Aorta (tissue), 5 donors: ENCODE measurements at regions of chr5 and their contacts with region 1.

Region 1: DNA sequence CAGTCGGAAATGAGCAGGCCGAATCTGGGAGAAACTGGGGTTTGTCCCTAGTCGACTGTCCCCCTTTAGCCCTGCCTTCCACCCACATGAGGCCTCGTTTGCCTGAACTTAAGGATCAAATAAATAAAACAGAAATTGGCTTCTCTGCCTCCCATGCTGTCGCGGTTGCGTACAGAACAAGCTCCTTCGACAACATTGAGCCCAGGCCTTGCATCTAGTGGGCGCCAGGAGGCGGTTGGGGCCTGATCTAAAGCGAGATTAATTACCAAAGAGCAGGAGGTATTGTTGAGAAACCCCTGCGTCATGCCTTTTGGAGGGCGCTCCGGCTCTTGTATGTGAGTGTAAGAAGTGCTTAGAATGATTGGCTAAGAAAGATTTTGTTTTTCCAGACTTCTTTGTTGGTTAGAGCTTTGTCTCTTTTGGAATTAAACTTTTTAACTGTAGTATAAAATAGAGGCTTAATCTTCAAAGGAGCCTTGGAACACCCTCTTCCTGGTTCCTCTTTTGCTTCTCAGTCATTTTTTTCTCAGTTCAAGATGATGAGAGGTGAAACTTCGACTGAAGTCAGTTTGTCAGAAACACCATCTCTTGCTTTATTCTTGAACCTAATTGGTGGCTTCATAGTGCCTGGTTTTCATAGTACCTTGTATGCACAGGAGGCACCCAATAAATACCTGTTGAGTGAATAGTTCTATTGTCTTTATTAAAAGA is 827 bp downstream of the ATP6V0E1 start:
- DNase-seq: peak; percentile 82 to 87
- ATAC-seq: peak; percentile 87
- H3K4me3 ChIP-seq: peak overlapping the region; percentile 39 to 72
- H3K27ac ChIP-seq: peak overlapping the region; percentile 38 to 48
- H3K4me1 ChIP-seq: peaks cover 0 to 3% of the 10 kb centered on the region in 2 donors
- H3K27me3 ChIP-seq: no peaks in the 10 kb centered on the region

Region 2: GRCh38 chr5:173057062-173057924 is 72.9 kb after region 1 on chr5:
- intact Hi-C with region 1: loop called (anchors 2 to 5 kb)
- DNase-seq: peak; percentile 100
- ATAC-seq: peak; percentile 98
- H3K4me3 ChIP-seq: peak overlapping the region; percentile 93 to 98
- H3K27ac ChIP-seq: peak overlapping the region; percentile 18 to 88
- H3K4me1 ChIP-seq: peaks cover 0 to 2% of the 10 kb centered on the region in 2 donors
- H3K27me3 ChIP-seq: no peaks in the 10 kb centered on the region

Region 3: DNA sequence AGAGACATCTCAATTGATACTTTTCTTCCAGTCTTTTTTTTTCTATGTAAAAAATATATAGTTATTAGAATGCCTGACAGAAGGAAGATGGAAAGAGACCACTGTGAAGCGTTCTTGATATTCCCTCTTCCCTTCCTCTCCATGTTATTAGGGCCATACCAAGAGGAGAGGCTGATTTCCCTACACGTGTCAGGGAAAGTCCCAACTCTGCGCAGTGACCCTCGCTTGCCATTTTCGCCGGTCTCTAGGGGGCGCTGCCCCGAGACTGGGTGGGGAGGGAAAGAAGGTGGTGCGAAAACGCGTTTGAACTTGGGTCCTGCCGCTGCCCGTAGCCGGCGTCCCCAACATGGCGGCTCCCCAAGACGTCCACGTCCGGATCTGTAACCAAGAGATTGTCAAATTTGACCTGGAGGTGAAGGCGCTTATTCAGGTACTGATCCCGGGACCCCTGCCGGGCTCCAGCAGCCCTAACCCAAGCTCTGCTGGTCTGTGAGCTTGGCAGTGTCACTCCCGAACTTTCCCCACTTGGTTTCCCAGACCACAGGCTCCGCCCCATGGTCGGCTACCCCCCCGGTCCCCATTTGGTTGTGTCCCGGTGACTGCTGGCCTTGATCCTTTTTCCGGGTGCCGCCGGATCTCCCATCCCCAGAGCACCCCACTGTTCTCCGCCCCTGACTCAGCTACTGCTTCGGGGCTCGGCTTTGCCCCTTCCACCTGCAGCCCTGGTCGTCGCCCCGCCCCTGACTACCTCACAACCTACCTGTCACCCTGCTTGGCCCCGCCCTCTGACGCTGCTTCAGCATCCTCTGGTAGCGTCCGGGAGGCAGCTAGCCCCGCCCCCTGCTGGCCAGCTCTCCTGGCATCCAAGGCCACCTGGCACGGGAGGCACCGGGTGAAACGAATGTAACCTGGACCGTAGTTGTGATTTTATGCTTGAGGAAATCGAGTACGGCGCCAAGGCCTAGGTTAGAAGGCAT is 160.1 kb after region 1 on chr5 and contains the start of gene BNIP1:
- intact Hi-C with region 1: loop called (anchors 5 to 10 kb)
- DNase-seq: peak; percentile 97 to 99
- ATAC-seq: peak; percentile 96
- H3K4me3 ChIP-seq: peak within 1 kb of the TSS; percentile 77 to 78
- H3K27ac ChIP-seq: peak within 1 kb of the TSS in 1 of 2 donors; percentile 9
- H3K4me1 ChIP-seq: no peaks in the 10 kb centered on the region
- H3K27me3 ChIP-seq: no peaks in the 10 kb centered on the region
- total RNA-seq, gene BNIP1: 8.2 to 8.8 TPM

Region 4: DNA sequence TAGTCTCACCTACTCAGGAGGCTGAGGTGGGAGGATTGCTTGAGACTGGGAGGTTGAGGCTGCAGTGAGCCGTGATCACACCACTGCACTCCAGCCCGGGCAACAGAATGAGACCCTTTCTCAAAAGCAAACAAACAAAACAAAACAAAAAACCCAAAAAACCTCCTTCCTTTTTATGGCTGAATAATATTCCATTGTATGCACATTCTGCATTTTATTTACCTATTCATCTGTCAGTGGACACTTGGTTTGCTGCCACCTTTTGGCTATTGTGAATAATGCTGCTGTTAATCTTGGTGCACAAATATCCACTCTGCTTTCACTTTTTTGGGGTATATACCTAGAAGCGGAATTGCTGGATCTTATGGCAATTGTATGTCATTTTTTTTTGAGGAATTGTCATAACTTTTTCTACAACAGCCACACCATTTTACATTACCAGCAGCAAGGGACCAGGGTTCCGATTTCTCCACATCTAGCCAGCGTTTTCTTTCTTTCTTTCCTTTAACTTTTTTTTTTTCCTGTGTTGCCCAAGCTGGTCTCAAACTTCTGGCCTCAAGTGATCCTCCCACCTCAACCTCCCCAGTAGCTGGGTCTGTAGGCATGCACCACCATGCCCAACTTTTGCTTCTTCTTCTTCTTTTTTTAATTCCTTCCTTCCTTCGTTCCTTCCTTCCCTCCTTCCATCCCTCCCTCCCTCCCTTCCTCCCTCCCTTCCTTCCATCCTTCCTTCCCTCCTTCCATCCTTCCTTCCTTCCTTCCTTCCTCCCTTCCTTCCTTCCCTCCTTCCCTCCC is 220.0 kb after region 1 on chr5:
- intact Hi-C with region 1: loop called (anchors 5 kb)
- DNase-seq: no peak
- ATAC-seq: no peak
- H3K4me3 ChIP-seq: no peak overlapping the region
- H3K27ac ChIP-seq: no peak overlapping the region
- H3K4me1 ChIP-seq: no peaks in the 10 kb centered on the region
- H3K27me3 ChIP-seq: peaks cover 0 to 4% of the 10 kb centered on the region in 2 donors

Region 5: GRCh38 chr5:173283318-173284288 is 299.2 kb after region 1 on chr5:
- intact Hi-C with region 1: loop called in 1 of 2 experiments (anchors 10 kb)
- DNase-seq: peak; percentile 78 to 88
- ATAC-seq: peak; percentile 83
- H3K4me3 ChIP-seq: no peak overlapping the region
- H3K27ac ChIP-seq: no peak overlapping the region
- H3K4me1 ChIP-seq: no peaks in the 10 kb centered on the region
- H3K27me3 ChIP-seq: no peaks in the 10 kb centered on the region